ENCODE measurements at regions of chr1 and their contacts with region 1.

Region 1: GRCh38 chr1:18597160-18598042 is 33.2 kb upstream of the PAX7 start:
- DNase-seq: peak; percentile 25
- ATAC-seq: peak; percentile 85
- H3K4me3 ChIP-seq: no peak overlapping the region
- H3K27ac ChIP-seq: no peak overlapping the region
- H3K4me1 ChIP-seq: no peaks in the 10 kb centered on the region
- H3K27me3 ChIP-seq: peaks cover 2% of the 10 kb centered on the region; the same call in 1 of the 2 replicates
- CTCF ChIP-seq: peak; percentile 88
- POLR2A ChIP-seq: no peak
- RAD21 ChIP-seq: peak; percentile 93

Region 2: GRCh38 chr1:18681423-18681835 is 84.0 kb after region 1 on chr1:
- CTCF ChIA-PET with region 1: no interaction called
- POLR2A ChIA-PET with region 1: no interaction called
- dilution Hi-C with region 1: no loop called
- in situ Hi-C with region 1: no loop called
- intact Hi-C with region 1: loop called (anchors 2 kb)
- DNase-seq: peak; percentile 16
- ATAC-seq: 0 out of 2 replicates have a peak, but pooled peaks have one; percentile 44
- H3K4me3 ChIP-seq: no peak overlapping the region
- H3K27ac ChIP-seq: no peak overlapping the region
- H3K4me1 ChIP-seq: no peaks in the 10 kb centered on the region
- H3K27me3 ChIP-seq: peaks cover 4% of the 10 kb centered on the region
- CTCF ChIP-seq: peak; percentile 43
- POLR2A ChIP-seq: no peak
- RAD21 ChIP-seq: peak; percentile 27; the same call in 1 of the 2 replicates

Region 3: GRCh38 chr1:18820791-18821641 is 223.6 kb after region 1 on chr1:
- CTCF ChIA-PET with region 1: interaction called, 13 read pairs
- POLR2A ChIA-PET with region 1: no interaction called
- dilution Hi-C with region 1: no loop called
- in situ Hi-C with region 1: loop called (anchors 5 kb)
- intact Hi-C with region 1: loop called (anchors 1 kb)
- DNase-seq: peak; percentile 50
- ATAC-seq: peak; percentile 95
- H3K4me3 ChIP-seq: no peak overlapping the region
- H3K27ac ChIP-seq: no peak overlapping the region
- H3K4me1 ChIP-seq: no peaks in the 10 kb centered on the region
- H3K27me3 ChIP-seq: peaks cover 21% of the 10 kb centered on the region; the same call in 1 of the 2 replicates
- CTCF ChIP-seq: peak; percentile 81
- POLR2A ChIP-seq: no peak
- RAD21 ChIP-seq: peak; percentile 72

Region 4: DNA sequence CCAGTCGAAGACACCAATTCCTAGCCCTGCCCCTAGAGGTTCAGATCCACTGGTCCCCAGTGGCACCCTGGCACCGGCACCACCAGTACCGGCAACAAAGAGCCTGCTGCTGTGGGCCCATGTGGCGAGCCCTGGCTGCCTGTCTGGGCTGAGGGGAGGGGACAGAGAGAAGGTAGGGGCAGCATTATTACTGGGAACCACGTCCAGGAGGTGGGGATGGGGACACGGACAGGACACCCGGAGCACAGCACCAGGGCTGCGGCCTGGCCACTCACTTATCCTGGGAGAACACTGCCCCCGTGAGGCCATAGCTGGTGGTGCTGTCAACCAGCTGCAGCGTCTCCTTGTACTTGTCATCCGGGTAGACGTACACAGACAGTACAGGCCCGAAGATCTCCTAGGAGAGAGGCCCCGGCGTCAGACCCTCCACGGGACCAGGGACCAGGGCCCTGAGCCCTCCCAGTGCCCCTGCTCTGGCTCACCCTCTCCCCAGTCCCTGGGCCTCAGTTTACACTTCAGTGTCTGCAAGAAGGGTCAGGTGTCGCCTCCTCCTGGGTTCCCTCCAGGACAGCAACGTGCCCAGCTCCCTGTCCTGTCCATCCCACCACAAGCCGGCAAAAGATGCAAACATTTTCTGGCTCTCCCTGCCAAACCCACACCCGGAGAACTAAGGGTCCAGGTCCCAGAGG is 277.9 kb after region 1 on chr1:
- CTCF ChIA-PET with region 1: interaction called, 4 read pairs
- POLR2A ChIA-PET with region 1: no interaction called
- dilution Hi-C with region 1: no loop called
- in situ Hi-C with region 1: loop called (anchors 10 kb)
- intact Hi-C with region 1: loop called (anchors 1 kb)
- DNase-seq: peak; percentile 77
- ATAC-seq: peak; percentile 99
- H3K4me3 ChIP-seq: no peak overlapping the region
- H3K27ac ChIP-seq: no peak overlapping the region
- H3K4me1 ChIP-seq: no peaks in the 10 kb centered on the region
- H3K27me3 ChIP-seq: no peaks in the 10 kb centered on the region
- CTCF ChIP-seq: peak; percentile 82
- POLR2A ChIP-seq: no peak
- RAD21 ChIP-seq: peak; percentile 71

Region 5: GRCh38 chr1:19096036-19096833 is 498.8 kb after region 1 on chr1:
- CTCF ChIA-PET with region 1: no interaction called
- POLR2A ChIA-PET with region 1: no interaction called
- dilution Hi-C with region 1: no loop called
- in situ Hi-C with region 1: no loop called
- intact Hi-C with region 1: loop called (anchors 10 kb)
- DNase-seq: peak; percentile 7
- ATAC-seq: peak; percentile 24; the same call in 1 of the 2 replicates
- H3K4me3 ChIP-seq: no peak overlapping the region
- H3K27ac ChIP-seq: no peak overlapping the region
- H3K4me1 ChIP-seq: peaks cover 9% of the 10 kb centered on the region
- H3K27me3 ChIP-seq: no peaks in the 10 kb centered on the region
- CTCF ChIP-seq: peak; percentile 34
- POLR2A ChIP-seq: no peak
- RAD21 ChIP-seq: peak; percentile 55

Measured in IMR-90 (cell line).